Panc1 (cell line): ENCODE measurements at regions of chrX and their contacts with region 1.

Region 1: GRCh38 chrX:6225911-6226595 is 2.6 kb downstream of the NLGN4X start:
- DNase-seq: no peak
- ATAC-seq: no peak
- H3K4me3 ChIP-seq: no peak overlapping the region; a peak in 1 of 4 replicates
- H3K27ac ChIP-seq: no peak overlapping the region
- H3K4me1 ChIP-seq: no peaks in the 10 kb centered on the region
- H3K27me3 ChIP-seq: no peaks in the 10 kb centered on the region
- CTCF ChIP-seq: no peak; the same call in 1 of the 2 replicates

Region 2: DNA sequence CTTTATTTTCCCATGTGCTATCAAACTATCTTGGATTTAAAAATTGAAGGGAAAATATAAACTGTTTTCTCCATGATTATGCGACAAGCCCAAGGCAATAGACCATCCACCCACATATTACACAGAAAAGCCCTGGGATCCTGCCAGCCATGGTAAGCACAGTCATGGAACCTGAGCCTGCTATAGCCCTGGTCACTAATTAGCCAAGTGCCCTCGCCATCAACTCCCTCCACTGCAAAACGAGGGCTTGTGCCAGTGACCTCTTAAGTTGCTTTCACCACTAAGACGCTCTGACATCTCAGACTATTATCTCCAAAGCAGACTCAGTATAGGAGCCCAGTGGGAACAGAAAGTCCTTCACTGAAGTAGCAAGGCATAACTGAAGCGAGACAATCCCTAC is 66.6 kb before region 1 on chrX:
- CTCF ChIA-PET with region 1: no interaction called
- POLR2A ChIA-PET with region 1: no interaction called
- in situ Hi-C with region 1: no loop called
- intact Hi-C with region 1: no loop called
- DNase-seq: no peak
- ATAC-seq: no peak
- H3K4me3 ChIP-seq: no peak overlapping the region
- H3K27ac ChIP-seq: no peak overlapping the region
- H3K4me1 ChIP-seq: no peaks in the 10 kb centered on the region
- H3K27me3 ChIP-seq: no peaks in the 10 kb centered on the region
- CTCF ChIP-seq: no peak

Region 3: DNA sequence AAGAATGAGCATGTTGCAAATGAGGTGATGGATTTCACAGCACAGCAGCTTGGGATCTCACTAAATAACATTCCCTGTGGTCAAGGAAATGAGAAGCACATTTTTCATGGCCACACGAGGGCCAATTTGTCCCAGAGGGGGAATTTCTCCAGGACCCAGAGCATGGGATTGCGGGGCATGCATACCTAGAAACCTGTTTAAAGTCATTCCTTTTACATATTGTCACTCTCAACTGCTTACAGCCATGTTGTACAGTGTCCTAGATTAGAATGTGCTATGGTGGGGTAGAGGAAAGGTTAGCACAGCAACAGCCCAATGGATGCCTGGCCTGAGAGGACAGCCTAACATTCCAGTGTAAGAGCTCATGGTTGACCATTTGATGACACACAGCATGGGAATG is 40.0 kb after region 1 on chrX:
- CTCF ChIA-PET with region 1: interaction called, 11 read pairs
- POLR2A ChIA-PET with region 1: no interaction called
- in situ Hi-C with region 1: no loop called
- intact Hi-C with region 1: no loop called
- DNase-seq: no peak
- ATAC-seq: no peak
- H3K4me3 ChIP-seq: no peak overlapping the region
- H3K27ac ChIP-seq: no peak overlapping the region
- H3K4me1 ChIP-seq: no peaks in the 10 kb centered on the region
- H3K27me3 ChIP-seq: no peaks in the 10 kb centered on the region
- CTCF ChIP-seq: no peak